Kidney (tissue), 22 donors: ENCODE measurements at regions of chr12 and their contacts with region 1.

Region 1: GRCh38 chr12:12081836-12082497 is 11.2 kb downstream of the BCL2L14 start:
- DNase-seq: no peak
- H3K4me3 ChIP-seq: no peak overlapping the region
- H3K27ac ChIP-seq: peak overlapping the region; percentile 8
- H3K4me1 ChIP-seq: no peaks in the 10 kb centered on the region
- H3K27me3 ChIP-seq: no peaks in the 10 kb centered on the region
- CTCF ChIP-seq: peak; percentile 32

Region 2: DNA sequence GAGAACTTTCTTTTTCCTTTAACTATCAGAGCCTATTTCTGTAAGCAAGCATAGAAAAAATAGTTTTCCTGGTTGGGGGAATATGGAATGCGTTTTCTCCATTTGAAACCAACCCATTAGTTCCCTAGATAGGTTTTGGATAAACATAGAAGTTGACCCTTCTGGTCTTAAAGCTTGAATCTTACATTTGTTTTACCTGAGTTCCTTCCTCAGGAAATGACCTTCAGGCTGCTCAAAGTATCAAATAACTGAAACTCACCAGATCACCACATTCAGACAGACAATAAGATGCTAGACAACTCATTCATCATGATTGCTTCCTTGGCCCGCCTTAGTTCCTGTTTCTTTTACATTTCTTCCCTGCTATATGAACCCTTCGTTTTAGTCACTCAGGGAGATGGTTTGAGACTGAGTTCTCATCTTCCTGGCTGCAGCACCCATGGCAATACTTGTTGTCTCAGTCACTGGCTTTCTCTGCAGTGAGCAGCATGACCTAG is 132.7 kb after region 1 on chr12:
- intact Hi-C with region 1: no loop called
- DNase-seq: peak in 2 of 5 donors; percentile 32 to 51
- H3K4me3 ChIP-seq: no peak overlapping the region
- H3K27ac ChIP-seq: peak overlapping the region; percentile 14 to 26
- H3K4me1 ChIP-seq: peaks cover 0 to 33% (median 17%) of the 10 kb centered on the region in 3 donors
- H3K27me3 ChIP-seq: no peaks in the 10 kb centered on the region
- CTCF ChIP-seq: no peak

Region 3: GRCh38 chr12:12334367-12335040 is 252.5 kb after region 1 on chr12:
- intact Hi-C with region 1: loop called (anchors 10 kb)
- DNase-seq: peak in 3 of 5 donors; percentile 50 to 58 (median 50)
- H3K4me3 ChIP-seq: no peak overlapping the region
- H3K27ac ChIP-seq: no peak overlapping the region
- H3K4me1 ChIP-seq: peaks cover 0 to 8% (median 5%) of the 10 kb centered on the region in 3 donors
- H3K27me3 ChIP-seq: no peaks in the 10 kb centered on the region
- CTCF ChIP-seq: peak; percentile 76